CD4-positive, alpha-beta T cell (primary cell): ENCODE measurements at regions of chr3 and their contacts with region 1.

Region 1: GRCh38 chr3:27880969-27881892 is 159.1 kb upstream of the EOMES start:
- DNase-seq: peak; percentile 7 to 82 (median 55)
- ATAC-seq: peak; percentile 80
- H3K4me3 ChIP-seq: peak overlapping the region; percentile 57
- H3K4me3 Mint-ChIP-seq: peak overlapping the region; percentile 89
- H3K27ac ChIP-seq: peak overlapping the region; percentile 70 to 78
- H3K27ac Mint-ChIP-seq: peak overlapping the region; percentile 92
- H3K4me1 ChIP-seq: peaks cover 48% of the 10 kb centered on the region
- H3K4me1 Mint-ChIP-seq: peaks cover 74% of the 10 kb centered on the region
- H3K27me3 ChIP-seq: no peaks in the 10 kb centered on the region
- H3K27me3 Mint-ChIP-seq: no peaks in the 10 kb centered on the region
- CTCF ChIP-seq: no peak

Region 2: DNA sequence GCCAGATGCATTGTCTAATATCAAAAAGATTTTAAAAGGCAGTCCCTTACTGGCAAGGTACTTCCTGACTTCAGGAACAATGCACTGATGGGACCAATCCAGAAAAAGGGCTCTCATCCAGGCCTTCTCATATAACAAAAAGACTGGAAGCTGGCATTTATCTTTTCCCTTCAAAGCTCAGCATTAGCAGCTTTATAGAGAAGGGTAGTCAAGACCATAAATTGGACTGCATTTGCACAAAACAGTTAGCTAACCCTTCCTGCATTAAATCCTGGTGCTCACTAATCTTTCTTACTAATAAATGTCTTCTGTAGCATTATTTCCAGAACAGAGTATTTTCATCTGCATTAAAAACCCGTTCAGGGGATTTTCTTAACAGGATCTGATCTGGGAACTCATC is 466.0 kb before region 1 on chr3:
- CTCF ChIA-PET with region 1: no interaction called
- POLR2A ChIA-PET with region 1: no interaction called
- intact Hi-C with region 1: no loop called
- DNase-seq: no peak
- ATAC-seq: no peak
- H3K4me3 ChIP-seq: no peak overlapping the region
- H3K4me3 Mint-ChIP-seq: no peak overlapping the region
- H3K27ac ChIP-seq: no peak overlapping the region
- H3K27ac Mint-ChIP-seq: no peak overlapping the region
- H3K4me1 ChIP-seq: no peaks in the 10 kb centered on the region
- H3K4me1 Mint-ChIP-seq: peaks cover 6% of the 10 kb centered on the region
- H3K27me3 ChIP-seq: no peaks in the 10 kb centered on the region
- H3K27me3 Mint-ChIP-seq: no peaks in the 10 kb centered on the region
- CTCF ChIP-seq: no peak

Region 3: GRCh38 chr3:27721717-27722542 is 159.3 kb before region 1 on chr3 and contains the start of gene EOMES:
- CTCF ChIA-PET with region 1: no interaction called
- POLR2A ChIA-PET with region 1: interaction called, 4 read pairs
- intact Hi-C with region 1: loop called in 1 of 2 experiments (anchors 10 kb)
- DNase-seq: peak; percentile 50 to 89 (median 64)
- ATAC-seq: peak; percentile 86
- H3K4me3 ChIP-seq: peak within 1 kb of the TSS; percentile 68
- H3K4me3 Mint-ChIP-seq: peak within 1 kb of the TSS; percentile 92
- H3K27ac ChIP-seq: no peak within 1 kb of the TSS
- H3K27ac Mint-ChIP-seq: no peak within 1 kb of the TSS
- H3K4me1 ChIP-seq: peaks cover 37% of the 10 kb centered on the region
- H3K4me1 Mint-ChIP-seq: peaks cover 42% of the 10 kb centered on the region
- H3K27me3 ChIP-seq: peaks cover 62 to 70% of the 10 kb centered on the region in 2 experiments
- H3K27me3 Mint-ChIP-seq: peaks cover 92% of the 10 kb centered on the region
- CTCF ChIP-seq: no peak
- total RNA-seq, gene EOMES: 0.64 to 0.69 TPM

Region 4: GRCh38 chr3:27861046-27862036 is 19.9 kb before region 1 on chr3:
- CTCF ChIA-PET with region 1: no interaction called
- POLR2A ChIA-PET with region 1: interaction called, 19 read pairs
- intact Hi-C with region 1: no loop called
- DNase-seq: peak in 4 of 14 experiments; percentile 24 to 80 (median 38)
- ATAC-seq: peak; percentile 64
- H3K4me3 ChIP-seq: no peak overlapping the region
- H3K4me3 Mint-ChIP-seq: peak overlapping the region; percentile 64
- H3K27ac ChIP-seq: peak overlapping the region; percentile 54 to 67
- H3K27ac Mint-ChIP-seq: peak overlapping the region; percentile 87
- H3K4me1 ChIP-seq: peaks cover 26% of the 10 kb centered on the region
- H3K4me1 Mint-ChIP-seq: peaks cover 55% of the 10 kb centered on the region
- H3K27me3 ChIP-seq: no peaks in the 10 kb centered on the region
- H3K27me3 Mint-ChIP-seq: no peaks in the 10 kb centered on the region
- CTCF ChIP-seq: no peak

Region 5: GRCh38 chr3:27869152-27869551 is 12.1 kb before region 1 on chr3:
- CTCF ChIA-PET with region 1: no interaction called
- POLR2A ChIA-PET with region 1: interaction called, 13 read pairs
- intact Hi-C with region 1: no loop called
- DNase-seq: no peak
- ATAC-seq: no peak
- H3K4me3 ChIP-seq: no peak overlapping the region
- H3K4me3 Mint-ChIP-seq: no peak overlapping the region
- H3K27ac ChIP-seq: no peak overlapping the region
- H3K27ac Mint-ChIP-seq: no peak overlapping the region
- H3K4me1 ChIP-seq: no peaks in the 10 kb centered on the region
- H3K4me1 Mint-ChIP-seq: no peaks in the 10 kb centered on the region
- H3K27me3 ChIP-seq: no peaks in the 10 kb centered on the region
- H3K27me3 Mint-ChIP-seq: no peaks in the 10 kb centered on the region
- CTCF ChIP-seq: no peak